Activated CD8-positive, alpha-beta memory T cell treated with anti-CD3 and anti-CD28 coated beads, Interleukin-2, amount 10 ng/mL, durations not matched to agents 7 days and 5 days (primary cell): ENCODE measurements at regions of chr10 and their contacts with region 1.

Region 1: GRCh38 chr10:109883859-109884771 is 39.2 kb downstream of the XPNPEP1 start:
- DNase-seq: peak; percentile 70
- ATAC-seq: peak; percentile 66
- H3K4me3 Mint-ChIP-seq: no peak overlapping the region
- H3K27ac Mint-ChIP-seq: no peak overlapping the region
- H3K4me1 Mint-ChIP-seq: peaks cover 28% of the 10 kb centered on the region
- H3K27me3 Mint-ChIP-seq: no peaks in the 10 kb centered on the region

Region 2: DNA sequence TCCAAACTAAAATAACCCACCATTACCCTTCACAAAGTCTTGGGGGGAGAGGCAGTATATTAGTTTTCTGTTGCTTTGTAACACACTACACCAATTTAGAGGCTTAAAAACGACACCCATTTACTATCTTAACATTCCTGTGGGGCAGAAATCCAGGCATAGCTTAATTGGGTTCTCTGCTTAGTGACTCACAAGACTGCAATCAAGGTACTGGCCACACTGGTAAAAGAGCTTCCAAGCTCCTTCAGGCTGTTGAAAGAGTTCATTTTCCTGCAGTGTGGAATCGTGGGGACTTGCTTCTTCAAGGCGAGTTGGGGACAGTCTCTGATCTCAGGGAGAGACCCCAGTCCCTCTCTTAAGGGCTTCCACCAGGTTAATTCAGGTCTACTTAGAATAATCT is 99.9 kb before region 1 on chr10:
- CTCF ChIA-PET with region 1: no interaction called
- DNase-seq: no peak
- ATAC-seq: no peak
- H3K4me3 Mint-ChIP-seq: no peak overlapping the region
- H3K27ac Mint-ChIP-seq: no peak overlapping the region
- H3K4me1 Mint-ChIP-seq: no peaks in the 10 kb centered on the region
- H3K27me3 Mint-ChIP-seq: peaks cover 6% of the 10 kb centered on the region

Region 3: DNA sequence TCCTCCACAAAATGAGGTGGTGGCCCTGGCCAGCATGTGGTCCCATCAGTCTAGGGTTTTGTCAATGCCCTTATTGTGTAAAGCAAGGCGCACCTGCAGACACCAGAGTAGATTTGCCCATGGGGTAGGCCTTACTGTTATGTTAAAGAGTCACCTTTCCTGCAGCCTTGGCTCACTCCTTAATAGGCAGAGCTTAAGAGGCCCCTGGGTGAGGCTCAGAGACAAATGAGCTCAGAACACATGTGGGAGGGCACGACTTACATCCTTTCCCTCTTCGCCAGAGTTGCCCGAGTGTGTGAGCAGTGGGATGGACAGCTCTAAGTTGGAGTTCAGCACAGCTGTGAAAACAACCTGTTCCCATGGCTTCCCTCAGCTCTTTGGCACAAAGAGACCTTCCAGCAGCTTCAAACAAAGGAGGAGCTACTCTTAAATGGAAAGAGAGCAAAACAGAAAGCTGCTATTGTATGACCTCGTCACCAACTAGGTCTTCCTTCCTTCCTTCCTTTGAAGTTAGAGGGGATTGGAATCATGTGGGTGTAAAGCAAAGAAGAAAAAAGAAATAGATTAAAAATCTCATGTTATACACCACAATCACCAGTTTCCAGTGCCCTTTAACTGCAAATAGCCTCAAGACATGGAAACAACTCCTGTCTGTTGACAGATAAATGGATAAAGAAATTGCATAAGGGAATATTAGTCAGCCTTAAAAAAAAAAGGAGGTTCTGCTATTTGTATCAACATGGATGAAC is 51.0 kb after region 1 on chr10:
- CTCF ChIA-PET with region 1: interaction called, 10 read pairs
- DNase-seq: peak; percentile 45
- ATAC-seq: peak; percentile 38
- H3K4me3 Mint-ChIP-seq: peak overlapping the region; percentile 63
- H3K27ac Mint-ChIP-seq: peak overlapping the region; percentile 94
- H3K4me1 Mint-ChIP-seq: peaks cover 40% of the 10 kb centered on the region
- H3K27me3 Mint-ChIP-seq: peaks cover 3% of the 10 kb centered on the region

Region 4: GRCh38 chr10:109974504-109975191 is 90.5 kb after region 1 on chr10:
- CTCF ChIA-PET with region 1: interaction called, 10 read pairs
- DNase-seq: no peak
- ATAC-seq: no peak
- H3K4me3 Mint-ChIP-seq: no peak overlapping the region
- H3K27ac Mint-ChIP-seq: no peak overlapping the region
- H3K4me1 Mint-ChIP-seq: no peaks in the 10 kb centered on the region
- H3K27me3 Mint-ChIP-seq: peaks cover 19% of the 10 kb centered on the region

Region 5: DNA sequence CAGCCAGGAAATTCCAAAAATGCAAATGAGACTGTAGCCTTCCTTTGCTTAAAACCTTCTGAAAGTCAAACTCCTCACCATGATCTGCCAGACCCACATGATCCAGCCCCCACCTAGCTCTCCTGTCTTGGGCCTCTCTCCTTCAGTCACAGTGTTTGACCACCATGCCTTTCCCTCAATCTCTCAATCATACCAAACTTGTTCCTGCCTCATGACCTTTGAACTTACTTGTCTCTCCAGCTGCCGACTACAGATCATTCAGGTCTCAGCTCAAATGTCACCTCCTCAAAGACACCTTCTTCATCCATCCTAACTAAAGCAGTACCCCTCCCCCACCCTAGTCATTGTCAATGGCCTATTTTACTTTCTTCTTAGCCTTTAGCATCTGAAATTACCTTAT is 114.4 kb after region 1 on chr10:
- CTCF ChIA-PET with region 1: interaction called, 10 read pairs
- DNase-seq: no peak
- ATAC-seq: no peak
- H3K4me3 Mint-ChIP-seq: no peak overlapping the region
- H3K27ac Mint-ChIP-seq: no peak overlapping the region
- H3K4me1 Mint-ChIP-seq: peaks cover 2% of the 10 kb centered on the region
- H3K27me3 Mint-ChIP-seq: peaks cover 2% of the 10 kb centered on the region

Region 6: GRCh38 chr10:110137142-110137545 is 253.0 kb after region 1 on chr10:
- CTCF ChIA-PET with region 1: interaction called, 13 read pairs
- DNase-seq: no peak
- ATAC-seq: peak; percentile 72
- H3K4me3 Mint-ChIP-seq: no peak overlapping the region
- H3K27ac Mint-ChIP-seq: peak overlapping the region; percentile 25
- H3K4me1 Mint-ChIP-seq: peaks cover 28% of the 10 kb centered on the region
- H3K27me3 Mint-ChIP-seq: no peaks in the 10 kb centered on the region